ENCODE measurements at regions of chr12 and their contacts with region 1.

Region 1: DNA sequence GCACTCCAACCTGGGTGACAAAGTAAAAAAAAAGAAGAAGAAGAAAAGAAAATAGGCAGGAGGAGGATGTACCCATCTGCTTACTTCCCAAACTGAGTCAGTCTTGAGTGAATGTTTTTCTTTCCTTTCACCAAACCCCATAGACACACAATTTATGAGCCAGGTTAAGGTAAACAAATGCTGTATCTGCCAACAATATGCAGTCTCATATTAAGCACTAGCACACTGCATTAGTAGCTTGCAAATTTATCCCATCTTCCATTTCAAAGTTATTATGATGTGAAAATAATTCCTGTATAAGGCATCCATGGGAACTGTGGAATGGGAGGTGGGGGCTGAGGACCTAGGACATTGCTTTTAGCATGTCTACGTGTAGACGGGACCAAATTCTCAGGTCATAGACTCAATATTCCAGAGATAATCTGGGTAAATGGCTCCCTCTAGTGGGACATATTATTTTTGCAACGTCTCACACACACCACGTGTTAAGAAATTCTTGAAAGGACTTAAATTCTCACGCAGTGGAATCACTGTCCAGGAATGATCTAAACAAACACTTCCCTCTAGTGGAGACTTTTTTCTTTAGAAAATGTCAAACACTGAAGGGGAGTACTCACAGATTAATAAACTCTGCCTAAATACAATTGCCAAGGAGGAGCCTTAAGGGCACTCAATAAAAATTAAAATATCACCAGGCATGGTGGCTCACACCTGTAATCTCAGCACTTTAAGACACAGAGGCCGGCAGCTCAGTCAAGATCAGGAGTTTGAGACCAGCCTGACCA is 17.1 kb upstream of the OR10P1 start:
- DNase-seq: no peak
- ATAC-seq: peak; percentile 96 to 99 (median 98)
- H3K4me3 ChIP-seq: no peak overlapping the region
- H3K27ac ChIP-seq: no peak overlapping the region
- H3K4me1 ChIP-seq: no peaks in the 10 kb centered on the region
- H3K27me3 ChIP-seq: no peaks in the 10 kb centered on the region
- CTCF ChIP-seq: peak; percentile 84 to 92 (median 87)
- POLR2A ChIP-seq: no peak

Region 2: GRCh38 chr12:55194382-55194781 is 425.2 kb before region 1 on chr12:
- intact Hi-C with region 1: loop called in 1 of 2 experiments (anchors 10 kb)
- DNase-seq: no peak
- ATAC-seq: no peak
- H3K4me3 ChIP-seq: no peak overlapping the region
- H3K27ac ChIP-seq: no peak overlapping the region
- H3K4me1 ChIP-seq: no peaks in the 10 kb centered on the region
- H3K27me3 ChIP-seq: no peaks in the 10 kb centered on the region
- CTCF ChIP-seq: no peak
- POLR2A ChIP-seq: no peak

Measured in right lobe of liver (tissue), 6 donors.